Psoas muscle (tissue), 8 donors: ENCODE measurements at regions of chr2 and their contacts with region 1.

Region 1: DNA sequence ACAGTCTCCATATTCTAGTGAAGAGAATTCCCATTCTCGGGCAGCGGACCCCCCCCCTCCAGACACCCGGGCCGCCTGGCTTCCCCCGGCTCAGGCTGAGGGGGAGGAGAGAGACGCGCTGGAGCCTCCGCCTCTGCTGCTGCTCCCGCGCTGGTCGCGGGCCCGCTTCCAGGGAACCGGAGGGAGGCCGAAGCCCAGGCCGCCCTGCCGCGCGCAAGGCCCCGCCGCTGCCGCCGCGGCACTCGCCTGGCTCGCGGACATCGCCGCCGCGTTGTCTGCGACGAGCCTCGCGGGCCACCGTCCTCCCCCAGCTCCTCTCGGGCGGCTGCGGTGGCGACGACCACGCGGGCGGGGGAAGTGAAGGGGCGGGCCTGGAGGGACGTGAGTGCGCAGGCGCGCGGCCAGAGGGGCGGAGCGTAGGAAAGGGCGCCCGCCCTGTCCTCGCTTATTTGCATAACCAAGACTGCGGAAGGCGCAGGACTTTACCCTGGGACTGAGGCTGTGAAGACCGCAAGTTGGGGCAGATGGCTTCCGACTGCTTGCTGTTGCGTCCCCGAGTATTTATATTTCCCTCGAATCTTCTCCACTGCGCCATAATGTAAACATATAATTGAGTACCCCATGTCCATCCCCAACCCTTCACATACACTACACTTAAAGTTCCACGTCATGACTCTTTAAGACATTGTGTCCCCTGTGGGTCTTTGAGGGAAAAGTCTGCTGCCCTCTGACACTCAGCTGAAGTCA is at the start of gene ARL5A:
- DNase-seq: peak; percentile 94 to 98
- ATAC-seq: peak; percentile 93 to 98 (median 95)
- H3K4me3 ChIP-seq: peak within 1 kb of the TSS; percentile 87
- H3K27ac ChIP-seq: peak within 1 kb of the TSS; percentile 93
- H3K4me1 ChIP-seq: peaks cover 44% of the 10 kb centered on the region
- H3K27me3 ChIP-seq: no peaks in the 10 kb centered on the region
- CTCF ChIP-seq: no peak
- total RNA-seq, gene ARL5A: 42.5 to 71.9 (median 51.7) TPM

Region 2: DNA sequence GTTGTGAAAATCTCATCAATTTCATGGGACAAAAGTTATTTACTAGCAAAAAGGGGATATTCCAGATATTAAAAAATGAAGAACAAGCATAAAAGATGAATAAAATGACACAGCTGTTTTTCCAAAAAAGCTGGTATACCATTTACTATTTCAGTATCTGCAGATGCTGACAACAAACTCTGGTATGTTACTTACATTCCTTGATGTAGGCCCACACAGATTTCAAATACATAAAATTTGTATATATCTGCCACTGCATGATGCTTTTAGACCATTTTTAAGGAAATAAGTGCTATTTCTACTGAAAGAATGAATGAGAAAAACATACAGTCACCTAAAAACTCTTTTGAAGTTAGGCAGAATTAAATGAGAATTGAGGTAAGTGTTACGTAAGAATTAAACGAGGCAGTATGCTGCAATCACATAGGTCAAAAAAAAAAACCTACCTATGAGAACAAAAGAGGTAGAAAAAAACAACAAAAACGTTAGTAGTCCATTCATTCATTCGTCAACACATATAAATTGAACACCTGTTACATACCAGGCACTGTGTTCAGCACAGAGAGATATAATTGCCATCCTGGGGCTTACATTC is 32.6 kb before region 1 on chr2:
- intact Hi-C with region 1: no loop called
- DNase-seq: no peak
- ATAC-seq: no peak
- H3K4me3 ChIP-seq: no peak overlapping the region
- H3K27ac ChIP-seq: peak overlapping the region; percentile 46
- H3K4me1 ChIP-seq: peaks cover 22% of the 10 kb centered on the region
- H3K27me3 ChIP-seq: no peaks in the 10 kb centered on the region
- CTCF ChIP-seq: no peak

Region 3: GRCh38 chr2:152005607-152006006 is 177.3 kb after region 1 on chr2:
- intact Hi-C with region 1: loop called (anchors 5 to 10 kb)
- DNase-seq: no peak
- ATAC-seq: no peak
- H3K4me3 ChIP-seq: no peak overlapping the region
- H3K27ac ChIP-seq: no peak overlapping the region
- H3K4me1 ChIP-seq: peaks cover 12% of the 10 kb centered on the region
- H3K27me3 ChIP-seq: no peaks in the 10 kb centered on the region
- CTCF ChIP-seq: no peak